ENCODE measurements at regions of chr21 and their contacts with region 1.

Region 1: DNA sequence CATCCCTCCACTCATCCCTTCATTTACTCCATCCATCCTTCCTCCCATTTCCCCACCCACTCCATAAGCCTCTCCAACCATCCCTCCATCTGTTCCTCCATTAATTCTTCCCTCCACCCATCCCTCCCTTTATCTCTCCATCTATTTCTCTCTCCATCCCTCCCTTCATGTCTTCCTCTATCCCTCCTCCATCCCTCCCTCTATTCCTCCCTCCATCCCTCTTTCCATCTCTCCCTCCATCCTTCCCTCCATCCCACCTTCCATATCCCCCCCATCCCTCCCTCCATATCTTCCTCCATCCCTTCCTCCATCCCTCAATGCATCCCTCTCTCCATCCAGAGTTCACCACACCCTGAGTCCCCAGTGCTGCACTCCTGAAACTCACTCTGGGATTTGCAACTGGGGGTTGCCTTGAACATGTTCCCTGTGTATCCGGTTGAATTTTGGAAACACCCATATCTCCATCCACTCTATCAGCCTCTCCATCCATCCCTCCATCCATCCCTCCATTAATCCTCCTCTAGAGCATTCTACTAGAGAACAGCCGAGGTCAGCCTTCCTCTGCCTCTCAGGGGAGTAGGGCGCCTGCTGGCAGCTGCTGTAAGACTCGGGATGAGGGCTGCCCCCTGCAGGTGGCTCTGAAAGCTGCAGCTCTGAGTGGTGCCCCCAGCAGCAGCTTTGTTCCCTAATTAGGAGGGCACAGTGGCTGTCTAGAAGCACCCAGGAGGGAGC is 39.4 kb downstream of the ABCG1 start:
- DNase-seq: peak; percentile 84 to 85
- ATAC-seq: peak; percentile 75
- H3K4me3 ChIP-seq: no peak overlapping the region
- H3K27ac ChIP-seq: no peak overlapping the region
- H3K4me1 ChIP-seq: no peaks in the 10 kb centered on the region
- H3K27me3 ChIP-seq: no peaks in the 10 kb centered on the region

Region 2: DNA sequence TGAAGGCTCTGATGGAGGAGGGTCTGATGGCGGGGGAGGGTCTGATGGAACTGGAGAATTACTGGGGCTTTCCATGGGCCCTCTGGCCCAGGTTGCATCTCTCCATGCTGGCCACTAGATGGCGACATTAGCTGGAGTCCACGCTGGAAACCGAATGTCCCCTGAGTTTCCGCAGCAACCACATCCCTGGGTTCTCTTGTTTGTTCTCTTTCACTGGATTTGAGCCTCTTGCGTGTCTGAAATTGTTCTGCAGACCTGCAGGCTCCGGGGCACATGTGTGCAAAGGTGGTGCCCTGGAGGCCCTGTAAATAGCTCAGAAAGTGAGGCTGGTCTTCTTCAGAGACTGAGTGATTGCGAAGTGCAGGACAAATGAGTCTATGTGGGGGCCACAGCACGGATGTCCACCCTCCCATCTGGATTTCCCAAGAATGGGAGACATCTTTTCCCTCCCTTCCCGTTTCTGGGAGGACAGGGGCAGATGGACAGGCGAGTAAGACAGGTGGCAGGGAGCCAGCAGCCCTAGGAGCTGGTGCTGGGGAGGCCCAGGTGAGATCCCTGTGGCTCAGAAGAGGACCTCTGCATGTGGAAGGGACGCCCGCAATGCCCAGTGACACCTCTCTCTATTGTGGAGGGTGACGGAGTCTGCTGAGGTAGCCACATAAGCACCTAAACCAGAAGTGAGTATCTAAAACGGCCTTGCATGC is 112.6 kb before region 1 on chr21:
- intact Hi-C with region 1: loop called (anchors 1 to 5 kb)
- DNase-seq: no peak
- ATAC-seq: peak; percentile 73
- H3K4me3 ChIP-seq: no peak overlapping the region
- H3K27ac ChIP-seq: no peak overlapping the region
- H3K4me1 ChIP-seq: no peaks in the 10 kb centered on the region
- H3K27me3 ChIP-seq: no peaks in the 10 kb centered on the region

Region 3: GRCh38 chr21:42164064-42164789 is 94.1 kb before region 1 on chr21:
- intact Hi-C with region 1: loop called in 1 of 2 experiments (anchors 5 kb)
- DNase-seq: peak in 1 of 2 donors; percentile 78
- ATAC-seq: peak; percentile 67
- H3K4me3 ChIP-seq: no peak overlapping the region
- H3K27ac ChIP-seq: no peak overlapping the region
- H3K4me1 ChIP-seq: no peaks in the 10 kb centered on the region
- H3K27me3 ChIP-seq: no peaks in the 10 kb centered on the region

Region 4: GRCh38 chr21:42199488-42200458 is 58.5 kb before region 1 on chr21:
- intact Hi-C with region 1: loop called in 1 of 2 experiments (anchors 10 kb)
- DNase-seq: no peak
- ATAC-seq: peak; percentile 79
- H3K4me3 ChIP-seq: no peak overlapping the region
- H3K27ac ChIP-seq: no peak overlapping the region
- H3K4me1 ChIP-seq: no peaks in the 10 kb centered on the region
- H3K27me3 ChIP-seq: no peaks in the 10 kb centered on the region

Measured in aorta (tissue), 5 donors.